CD4-positive, alpha-beta T cell (primary cell): ENCODE measurements at regions of chr6 and their contacts with region 1.

Region 1: GRCh38 chr6:28080631-28081485 is 490 bp downstream of the ZNF165 start:
- DNase-seq: peak; percentile 81 to 96 (median 90)
- ATAC-seq: peak; percentile 76
- H3K4me3 ChIP-seq: peak overlapping the region; percentile 71
- H3K4me3 Mint-ChIP-seq: peak overlapping the region; percentile 86
- H3K27ac ChIP-seq: peak overlapping the region; percentile 82 to 90
- H3K27ac Mint-ChIP-seq: peak overlapping the region; percentile 88
- H3K4me1 ChIP-seq: peaks cover 16% of the 10 kb centered on the region
- H3K4me1 Mint-ChIP-seq: peaks cover 22% of the 10 kb centered on the region
- H3K27me3 ChIP-seq: no peaks in the 10 kb centered on the region
- H3K27me3 Mint-ChIP-seq: no peaks in the 10 kb centered on the region
- CTCF ChIP-seq: no peak

Region 2: GRCh38 chr6:28068067-28068466 is 12.8 kb before region 1 on chr6:
- CTCF ChIA-PET with region 1: no interaction called
- POLR2A ChIA-PET with region 1: no interaction called
- intact Hi-C with region 1: no loop called
- DNase-seq: no peak
- ATAC-seq: no peak
- H3K4me3 ChIP-seq: no peak overlapping the region
- H3K4me3 Mint-ChIP-seq: no peak overlapping the region
- H3K27ac ChIP-seq: no peak overlapping the region
- H3K27ac Mint-ChIP-seq: no peak overlapping the region
- H3K4me1 ChIP-seq: no peaks in the 10 kb centered on the region
- H3K4me1 Mint-ChIP-seq: no peaks in the 10 kb centered on the region
- H3K27me3 ChIP-seq: peaks cover 9 to 44% of the 10 kb centered on the region in 2 experiments
- H3K27me3 Mint-ChIP-seq: peaks cover 59% of the 10 kb centered on the region
- CTCF ChIP-seq: no peak

Region 3: GRCh38 chr6:28124102-28124970 is 43.5 kb after region 1 on chr6 and contains the start of gene ZSCAN16:
- CTCF ChIA-PET with region 1: no interaction called
- POLR2A ChIA-PET with region 1: no interaction called
- intact Hi-C with region 1: loop called in 1 of 2 experiments (anchors 1 kb)
- DNase-seq: peak; percentile 51 to 87 (median 70)
- ATAC-seq: peak; percentile 56
- H3K4me3 ChIP-seq: peak within 1 kb of the TSS; percentile 85
- H3K4me3 Mint-ChIP-seq: peak within 1 kb of the TSS; percentile 83
- H3K27ac ChIP-seq: peak within 1 kb of the TSS; percentile 84 to 91
- H3K27ac Mint-ChIP-seq: peak within 1 kb of the TSS; percentile 95
- H3K4me1 ChIP-seq: peaks cover 20% of the 10 kb centered on the region
- H3K4me1 Mint-ChIP-seq: peaks cover 56% of the 10 kb centered on the region
- H3K27me3 ChIP-seq: no peaks in the 10 kb centered on the region
- H3K27me3 Mint-ChIP-seq: no peaks in the 10 kb centered on the region
- CTCF ChIP-seq: no peak
- total RNA-seq, gene ZSCAN16: 7.3 to 7.4 TPM

Region 4: GRCh38 chr6:28349892-28350737 is 269.3 kb after region 1 on chr6 and contains the start of gene ZKSCAN3:
- CTCF ChIA-PET with region 1: no interaction called
- POLR2A ChIA-PET with region 1: interaction called, 4 read pairs
- intact Hi-C with region 1: loop called in 1 of 2 experiments (anchors 5 kb)
- DNase-seq: peak; percentile 65 to 89 (median 80)
- ATAC-seq: peak; percentile 100
- H3K4me3 ChIP-seq: peak within 1 kb of the TSS; percentile 73
- H3K4me3 Mint-ChIP-seq: peak within 1 kb of the TSS; percentile 99
- H3K27ac ChIP-seq: peak within 1 kb of the TSS in 1 of 2 donors; percentile 46
- H3K27ac Mint-ChIP-seq: peak within 1 kb of the TSS; percentile 85
- H3K4me1 ChIP-seq: peaks cover 13% of the 10 kb centered on the region
- H3K4me1 Mint-ChIP-seq: peaks cover 43% of the 10 kb centered on the region
- H3K27me3 ChIP-seq: peaks cover 0 to 11% of the 10 kb centered on the region in 2 experiments
- H3K27me3 Mint-ChIP-seq: peaks cover 27% of the 10 kb centered on the region
- CTCF ChIP-seq: no peak
- total RNA-seq, gene ZKSCAN3: 0.88 to 0.89 TPM

Region 5: DNA sequence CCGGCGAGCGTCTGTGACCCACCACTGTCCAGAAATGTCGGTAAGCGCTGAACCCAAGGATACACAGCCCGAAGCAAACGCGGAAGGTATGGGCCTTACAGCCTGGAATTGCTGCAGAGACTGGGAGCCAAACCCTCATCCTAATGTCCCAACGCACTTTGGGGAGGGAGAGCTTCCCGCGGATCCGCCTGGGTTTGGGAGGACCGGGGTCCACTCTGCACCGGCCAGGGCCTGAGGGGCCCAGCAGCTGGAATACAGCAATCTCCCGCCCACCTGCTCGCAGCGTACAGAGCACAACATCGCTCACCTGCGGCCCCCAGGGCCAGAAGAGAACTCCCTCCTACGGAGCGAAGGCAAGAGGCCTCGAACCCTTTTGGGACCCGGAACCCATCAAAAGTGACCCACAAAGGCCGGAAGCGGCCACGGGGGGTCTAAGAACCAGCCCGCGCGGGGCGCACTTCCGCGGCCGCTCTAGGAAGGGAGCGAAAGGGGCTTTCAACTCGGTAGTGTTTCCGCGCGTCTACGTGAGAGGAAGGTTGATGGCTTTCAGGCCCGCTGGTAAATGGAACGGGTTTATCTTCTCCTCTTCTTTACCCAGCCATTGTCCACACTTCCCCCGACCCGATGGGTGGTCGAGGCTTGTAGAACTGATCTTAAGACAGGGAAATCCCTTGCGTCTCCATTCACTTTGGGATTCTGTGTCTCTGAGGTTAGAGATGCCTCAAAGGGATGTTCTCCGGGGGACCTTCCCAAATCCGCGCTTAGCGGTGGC is 318.7 kb after region 1 on chr6 and contains the start of gene ZSCAN12:
- CTCF ChIA-PET with region 1: no interaction called
- POLR2A ChIA-PET with region 1: no interaction called
- intact Hi-C with region 1: no loop called
- DNase-seq: peak; percentile 70 to 90 (median 82)
- ATAC-seq: peak; percentile 92
- H3K4me3 ChIP-seq: peak within 1 kb of the TSS; percentile 69
- H3K4me3 Mint-ChIP-seq: peak within 1 kb of the TSS; percentile 97
- H3K27ac ChIP-seq: peak within 1 kb of the TSS; percentile 23 to 49
- H3K27ac Mint-ChIP-seq: peak within 1 kb of the TSS; percentile 86
- H3K4me1 ChIP-seq: peaks cover 20% of the 10 kb centered on the region
- H3K4me1 Mint-ChIP-seq: peaks cover 55% of the 10 kb centered on the region
- H3K27me3 ChIP-seq: no peaks in the 10 kb centered on the region
- H3K27me3 Mint-ChIP-seq: peaks cover 32% of the 10 kb centered on the region
- CTCF ChIP-seq: peak; percentile 70
- total RNA-seq, gene ZSCAN12: 2.0 to 2.3 TPM